ENCODE measurements at regions of chr5 and their contacts with region 1.

Region 1: GRCh38 chr5:169583424-169584204 is at the start of gene SPDL1:
- DNase-seq: peak; percentile 85 to 99 (median 92)

Region 2: GRCh38 chr5:168268949-168269943 is 1314.4 kb before region 1 on chr5:
- intact Hi-C with region 1: loop called (anchors 5 kb)
- DNase-seq: peak; percentile 81 to 98 (median 90)

Region 3: DNA sequence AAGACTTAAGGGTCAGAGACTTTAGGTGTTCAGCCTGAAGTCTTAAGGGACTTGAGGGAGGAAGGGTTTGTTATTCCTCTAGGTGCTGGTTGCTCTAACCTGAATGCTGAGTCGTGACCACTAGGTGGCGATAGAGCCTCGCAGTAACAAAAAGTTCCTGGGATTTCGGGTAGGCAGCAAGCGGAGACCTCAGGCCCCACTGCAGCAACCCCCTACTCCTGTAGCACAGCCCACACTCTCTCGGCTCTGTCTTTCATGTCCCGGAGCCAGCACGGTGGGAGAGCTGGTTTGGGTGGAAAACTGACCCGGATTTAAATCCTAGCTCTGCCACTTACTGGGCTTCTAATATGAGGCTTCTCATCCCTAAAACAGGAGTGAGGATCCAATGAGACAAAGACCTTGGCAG is 904.1 kb before region 1 on chr5:
- intact Hi-C with region 1: loop called (anchors 5 kb)
- DNase-seq: peak; percentile 44 to 94 (median 78)

Region 4: DNA sequence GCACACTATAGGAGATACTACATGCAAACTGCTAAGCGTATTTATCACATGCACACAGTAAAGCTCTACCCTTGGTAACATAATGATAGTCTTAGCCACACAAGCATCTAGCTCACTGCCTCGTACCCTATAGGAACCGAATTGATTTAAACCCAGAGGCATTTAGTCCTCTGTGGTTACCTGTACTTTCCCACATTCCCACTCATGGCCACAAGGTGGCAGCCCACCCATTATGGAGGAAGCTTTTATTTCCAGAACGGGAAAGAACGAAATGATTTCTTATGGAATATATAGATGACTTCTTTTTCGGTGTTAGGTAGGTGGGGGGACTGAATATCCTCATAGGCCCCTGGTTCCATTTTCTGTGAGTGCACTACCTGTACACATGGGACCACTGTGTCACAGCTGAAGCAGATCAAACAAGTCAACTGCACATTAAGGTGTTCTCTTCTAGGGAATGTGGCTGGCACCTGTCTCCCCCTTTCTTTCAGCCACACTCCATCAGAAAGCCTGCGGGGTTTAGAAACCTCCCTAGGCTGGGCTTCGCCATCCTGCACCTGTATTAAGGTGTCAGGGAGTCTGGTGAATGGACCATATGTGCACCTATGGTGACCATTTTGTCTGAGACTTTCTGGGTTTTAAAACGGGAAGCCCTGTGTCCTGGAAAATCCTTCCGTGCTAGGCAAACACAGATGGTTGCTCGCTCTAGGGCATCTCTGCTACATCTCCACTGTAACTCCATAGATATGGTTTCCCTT is 595.9 kb before region 1 on chr5:
- intact Hi-C with region 1: loop called (anchors 2 kb)
- DNase-seq: peak; percentile 54 to 96 (median 80)

Region 5: DNA sequence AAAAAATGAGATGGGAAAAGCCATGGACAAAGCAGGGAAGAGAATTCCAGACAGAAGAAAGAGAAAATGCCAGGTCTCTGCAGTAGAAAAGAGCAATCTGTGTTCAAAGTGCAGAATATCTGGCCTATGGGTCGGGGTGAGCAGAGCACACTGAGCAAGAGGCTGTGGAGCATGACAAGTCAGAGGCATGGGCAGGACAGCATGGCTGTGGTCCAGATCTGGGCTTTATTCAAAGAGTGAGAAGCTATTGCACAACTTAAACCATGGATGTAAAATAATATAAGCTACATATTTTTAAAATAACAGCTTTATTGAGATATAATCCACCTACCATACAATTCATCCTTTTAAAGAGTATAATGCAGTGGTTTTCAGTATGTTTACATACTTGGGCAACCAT is 133.2 kb before region 1 on chr5:
- intact Hi-C with region 1: no loop called
- DNase-seq: no peak

Region 6: DNA sequence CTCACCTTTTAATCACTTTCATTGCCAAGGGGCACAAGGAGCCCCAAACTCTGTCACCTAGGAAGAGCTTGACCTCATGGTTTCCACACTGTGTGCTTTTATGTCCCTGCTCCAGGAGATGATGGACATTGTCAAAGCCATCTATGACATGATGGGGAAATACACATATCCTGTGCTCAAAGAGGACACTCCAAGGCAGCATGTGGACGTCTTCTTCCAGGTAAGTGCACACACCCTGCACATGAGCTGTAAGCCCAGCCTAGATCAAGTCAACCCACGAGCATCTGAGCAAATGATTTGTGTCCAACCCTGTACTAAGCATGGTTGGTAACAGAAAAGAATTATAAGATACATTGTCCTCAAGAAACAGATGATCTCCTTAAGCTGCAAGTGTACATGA is 1149.1 kb after region 1 on chr5:
- intact Hi-C with region 1: no loop called
- DNase-seq: no peak

Measured in posterior cingulate gyrus (tissue), 11 donors.